Dendritic cell treated with granulocyte-macrophage colony-stimulating factor and Interleukin-4, amounts not matched to agents 40 ng/mL and 50 ng/mL, for 4 days (primary cell): ENCODE measurements at regions of chr22 and their contacts with region 1.

Region 1: DNA sequence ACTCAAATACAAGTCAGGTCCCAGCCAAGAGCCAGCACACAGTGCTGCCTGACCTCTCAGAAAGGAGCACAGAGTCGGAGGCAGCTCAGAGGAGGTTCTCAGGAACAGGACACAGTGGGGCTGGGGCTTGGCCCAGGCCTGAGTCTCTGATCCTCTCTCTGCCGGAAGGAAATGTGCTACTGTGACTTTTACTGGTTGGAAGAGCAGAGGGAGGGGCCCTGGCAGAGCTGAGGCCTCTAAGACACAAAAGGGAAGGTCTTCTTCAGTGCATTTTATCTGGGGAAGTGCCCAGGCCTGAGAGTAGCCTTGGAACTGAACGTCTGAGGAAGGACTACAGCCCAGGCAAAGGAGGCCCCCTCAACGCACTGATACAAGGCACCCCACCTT is 16.2 kb upstream of the CASTOR1 start:
- H3K4me3 Mint-ChIP-seq: peak overlapping the region; percentile 52
- H3K27ac Mint-ChIP-seq: peak overlapping the region; percentile 85
- H3K4me1 Mint-ChIP-seq: peaks cover 100% of the 10 kb centered on the region
- H3K27me3 Mint-ChIP-seq: no peaks in the 10 kb centered on the region

Region 2: DNA sequence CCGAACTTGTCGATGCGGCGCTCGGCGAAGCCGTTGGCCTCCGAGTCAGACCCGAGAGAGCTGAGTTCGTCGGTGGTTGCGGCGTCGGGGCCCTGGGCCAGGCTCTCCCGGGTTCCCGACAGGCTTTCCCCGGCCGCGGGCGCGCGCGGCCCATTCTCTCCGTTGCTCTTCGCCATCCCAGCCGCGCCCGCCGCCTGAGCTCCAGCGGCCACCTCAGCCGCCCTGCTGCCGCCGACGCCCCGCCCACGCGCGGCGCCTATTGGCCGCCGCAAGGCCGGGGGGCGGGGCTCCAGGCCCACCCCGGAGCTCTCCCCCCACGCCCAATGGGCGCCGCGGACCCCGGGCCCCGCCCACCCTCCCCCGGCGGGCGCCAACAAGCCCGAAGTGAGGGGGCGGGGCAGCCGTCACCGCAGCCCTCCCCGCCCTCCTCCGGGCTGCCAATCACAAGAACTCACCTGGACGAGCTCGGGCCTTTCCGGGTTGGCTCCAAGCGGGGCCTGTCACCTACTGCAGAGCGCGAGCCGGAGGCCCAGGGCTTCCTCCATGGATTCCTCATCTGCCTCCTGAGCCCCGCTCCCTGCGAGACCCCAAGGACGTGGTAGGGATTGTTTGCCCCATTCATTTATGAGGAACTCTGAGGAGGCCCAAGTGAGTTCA is 21.3 kb after region 1 on chr22 and contains the start of gene TBC1D10A:
- intact Hi-C with region 1: loop called (anchors 2 kb)
- H3K4me3 Mint-ChIP-seq: peak within 1 kb of the TSS; percentile 86
- H3K27ac Mint-ChIP-seq: peak within 1 kb of the TSS; percentile 85
- H3K4me1 Mint-ChIP-seq: peaks cover 48% of the 10 kb centered on the region
- H3K27me3 Mint-ChIP-seq: no peaks in the 10 kb centered on the region